Heart right ventricle (tissue), 16 donors: ENCODE measurements at regions of chr17 and their contacts with region 1.

Region 1: GRCh38 chr17:17151962-17152361 is 54.2 kb downstream of the PLD6 start:
- DNase-seq: peak; percentile 85
- ATAC-seq: peak; percentile 86 to 97 (median 94)
- H3K4me3 ChIP-seq: no peak overlapping the region
- H3K27ac ChIP-seq: peak overlapping the region; percentile 60 to 83 (median 68)
- H3K4me1 ChIP-seq: peaks cover 13 to 53% (median 35%) of the 10 kb centered on the region in 9 donors
- H3K27me3 ChIP-seq: no peaks in the 10 kb centered on the region
- CTCF ChIP-seq: no peak

Region 2: DNA sequence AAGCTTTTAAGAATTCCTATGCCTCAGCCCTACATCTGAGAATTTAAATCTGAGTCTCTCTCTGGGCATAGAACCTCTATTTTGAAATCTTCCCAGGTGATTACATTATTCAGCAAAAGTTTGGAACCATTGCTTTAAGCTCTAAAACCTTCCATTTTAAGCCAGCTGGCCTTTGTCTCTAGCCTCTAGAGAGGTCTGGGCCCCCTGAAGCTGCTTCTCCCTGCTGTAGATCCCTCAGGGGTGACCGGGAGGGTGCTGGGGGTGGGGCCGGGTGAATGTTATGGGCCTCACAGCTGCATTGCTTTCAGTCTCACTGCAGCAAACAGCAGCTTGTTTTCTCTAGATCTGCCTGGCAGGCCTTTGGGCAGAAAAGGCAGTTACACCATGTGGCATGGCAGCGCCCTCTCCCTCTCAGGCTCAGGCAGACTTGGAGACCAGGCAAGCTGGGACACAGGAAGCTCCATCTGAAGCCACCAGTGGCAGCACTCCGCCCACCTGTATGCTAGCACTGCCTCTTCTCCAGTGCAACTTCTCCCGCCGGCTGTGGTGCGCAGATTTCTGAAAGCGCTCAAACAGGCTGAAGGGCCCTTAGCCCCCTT is 43.4 kb before region 1 on chr17:
- intact Hi-C with region 1: no loop called
- DNase-seq: no peak
- ATAC-seq: peak in 5 of 8 donors; percentile 11 to 49 (median 29)
- H3K4me3 ChIP-seq: no peak overlapping the region
- H3K27ac ChIP-seq: peak overlapping the region in 9 of 10 donors; percentile 54 to 90 (median 74)
- H3K4me1 ChIP-seq: peaks cover 47 to 100% (median 91%) of the 10 kb centered on the region in 9 donors
- H3K27me3 ChIP-seq: no peaks in the 10 kb centered on the region
- CTCF ChIP-seq: peak in 1 of 9 donors; percentile 11

Region 3: DNA sequence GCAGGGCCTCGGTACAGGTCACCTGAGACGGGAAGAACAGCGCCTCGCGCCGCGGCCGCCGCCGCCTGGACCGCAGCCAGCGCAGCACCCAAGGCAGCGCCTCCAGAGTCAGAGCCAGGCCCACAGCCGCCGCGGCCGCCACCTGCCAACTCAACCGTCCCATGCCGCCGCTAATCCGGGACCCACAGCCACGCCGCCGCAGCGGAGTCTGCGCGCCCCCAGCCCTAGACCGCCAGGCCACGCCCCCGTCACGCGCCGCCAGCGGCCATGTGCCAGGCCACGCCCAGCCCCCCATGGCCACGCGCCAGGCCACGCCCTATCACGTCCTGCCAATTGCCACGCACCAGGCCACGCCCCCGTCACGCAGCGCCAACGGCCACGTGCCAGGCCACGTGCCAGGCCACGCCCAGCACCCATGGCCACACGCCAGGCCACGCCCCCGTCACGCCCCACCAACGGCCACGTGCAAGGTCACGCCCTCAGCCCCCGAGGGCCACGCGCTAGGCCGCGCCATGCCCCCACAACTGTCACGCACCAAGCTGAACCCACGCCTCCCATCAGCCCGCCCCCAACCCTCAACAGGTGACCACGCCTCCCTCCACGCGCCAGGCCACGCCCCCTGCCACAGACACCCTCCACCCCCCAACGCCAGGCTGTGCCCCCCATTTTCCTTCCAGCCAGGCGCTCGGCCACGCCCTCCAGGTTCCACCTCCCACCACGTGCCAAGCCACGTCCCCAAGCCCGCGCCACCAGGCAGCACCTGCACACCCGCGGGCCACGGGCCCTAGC is 54.4 kb after region 1 on chr17 and contains the start of gene PLD6:
- intact Hi-C with region 1: loop called in 1 of 10 experiments (anchors 5 kb)
- DNase-seq: peak; percentile 65 to 83
- ATAC-seq: peak; percentile 8 to 71 (median 54)
- H3K4me3 ChIP-seq: peak within 1 kb of the TSS; percentile 29 to 64 (median 54)
- H3K27ac ChIP-seq: peak within 1 kb of the TSS; percentile 41 to 87 (median 80)
- H3K4me1 ChIP-seq: peaks cover 23 to 54% (median 38%) of the 10 kb centered on the region in 9 donors
- H3K27me3 ChIP-seq: no peaks in the 10 kb centered on the region
- CTCF ChIP-seq: no peak
- total RNA-seq, gene PLD6: 6.0 to 16.3 (median 8.2) TPM

Region 4: GRCh38 chr17:17280613-17281549 is 128.9 kb after region 1 on chr17 and contains the start of gene COPS3:
- intact Hi-C with region 1: loop called in 1 of 10 experiments (anchors 2 kb)
- DNase-seq: peak; percentile 99
- ATAC-seq: peak; percentile 96 to 98 (median 97)
- H3K4me3 ChIP-seq: peak within 1 kb of the TSS; percentile 85 to 100 (median 94)
- H3K27ac ChIP-seq: peak within 1 kb of the TSS; percentile 95 to 100 (median 98)
- H3K4me1 ChIP-seq: peaks cover 0 to 47% (median 33%) of the 10 kb centered on the region in 9 donors
- H3K27me3 ChIP-seq: no peaks in the 10 kb centered on the region
- CTCF ChIP-seq: no peak
- total RNA-seq, gene COPS3: 63.8 to 84.4 (median 71.1) TPM